Aorta (tissue), 5 donors: ENCODE measurements at regions of chr18 and their contacts with region 1.

Region 1: DNA sequence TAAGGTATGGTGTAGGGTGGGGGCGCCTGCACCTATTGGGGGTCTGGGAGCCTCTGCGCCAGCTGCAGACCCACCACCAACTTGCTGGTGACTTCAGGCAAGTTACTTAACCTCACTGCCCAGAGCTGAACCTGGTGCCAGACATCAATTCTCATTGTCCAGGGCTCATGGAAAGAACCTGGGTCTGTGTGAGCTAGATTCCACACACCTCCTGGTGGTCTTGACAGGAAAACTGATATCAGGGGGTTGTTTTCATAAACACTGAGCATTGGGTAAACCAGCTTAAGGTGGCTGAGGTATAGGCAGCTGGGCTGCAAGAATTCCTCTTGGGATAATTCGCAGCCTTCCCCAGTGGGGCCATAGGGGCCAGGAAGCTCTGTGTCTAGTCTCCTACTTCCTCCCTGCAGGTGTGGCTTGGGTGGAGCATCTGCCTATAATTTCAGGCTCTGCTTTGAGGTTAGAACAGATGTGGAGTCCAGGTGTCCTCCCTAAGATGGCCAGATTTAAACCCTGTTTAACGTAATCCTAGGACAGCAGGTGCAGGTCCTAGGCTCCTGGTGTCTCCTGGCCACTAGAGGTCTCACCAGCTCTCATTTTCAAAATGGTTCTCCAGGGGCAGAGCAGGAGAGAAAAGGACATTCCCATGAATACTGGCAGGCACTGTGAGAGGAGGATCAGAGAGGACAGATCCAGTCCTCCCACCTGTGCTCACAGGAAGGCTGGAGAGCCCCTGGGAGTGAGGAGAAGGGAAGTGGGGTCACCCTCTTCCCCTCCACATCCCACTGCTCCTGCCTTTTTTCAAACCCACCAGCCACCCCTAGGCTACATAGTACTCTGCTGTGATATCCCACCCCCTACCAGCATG is 100.4 kb upstream of the SMAD2 start:
- DNase-seq: peak in 1 of 2 donors; percentile 55
- ATAC-seq: peak; percentile 58
- H3K4me3 ChIP-seq: no peak overlapping the region
- H3K27ac ChIP-seq: no peak overlapping the region
- H3K4me1 ChIP-seq: no peaks in the 10 kb centered on the region
- H3K27me3 ChIP-seq: no peaks in the 10 kb centered on the region

Region 2: DNA sequence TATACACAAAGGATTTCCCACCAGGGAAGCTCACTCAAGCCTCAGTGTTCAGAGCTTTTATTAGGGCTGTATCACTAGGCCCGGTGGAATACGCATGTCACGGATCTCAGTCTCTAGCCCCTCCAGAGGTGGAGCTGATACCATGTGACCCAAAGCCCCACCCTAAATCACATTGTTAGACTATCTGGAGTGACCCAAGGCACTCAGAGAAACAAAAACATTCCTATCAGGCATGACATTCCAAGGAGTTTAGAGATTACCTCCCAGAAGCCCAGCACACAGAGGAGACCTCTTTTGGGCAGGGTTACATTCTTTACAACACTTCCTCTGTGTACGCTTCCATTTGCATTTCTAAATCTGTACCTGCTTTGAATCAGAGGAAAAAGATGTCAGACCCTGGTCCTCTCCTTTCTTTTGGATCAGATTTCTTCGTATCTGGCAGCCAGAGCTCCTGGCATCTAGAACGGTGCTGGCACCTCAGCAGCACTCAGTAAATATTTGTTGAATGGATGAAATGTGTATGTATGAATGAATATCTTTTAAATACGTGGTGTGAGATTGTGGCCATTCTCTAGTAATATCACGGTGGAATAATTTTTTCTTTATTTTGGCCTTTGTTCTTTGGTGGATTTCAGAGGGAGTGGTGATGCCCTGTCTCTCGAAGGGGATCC is 62.7 kb before region 1 on chr18:
- intact Hi-C with region 1: no loop called
- DNase-seq: no peak
- ATAC-seq: no peak
- H3K4me3 ChIP-seq: no peak overlapping the region
- H3K27ac ChIP-seq: peak overlapping the region; percentile 42 to 88
- H3K4me1 ChIP-seq: no peaks in the 10 kb centered on the region
- H3K27me3 ChIP-seq: no peaks in the 10 kb centered on the region

Region 3: DNA sequence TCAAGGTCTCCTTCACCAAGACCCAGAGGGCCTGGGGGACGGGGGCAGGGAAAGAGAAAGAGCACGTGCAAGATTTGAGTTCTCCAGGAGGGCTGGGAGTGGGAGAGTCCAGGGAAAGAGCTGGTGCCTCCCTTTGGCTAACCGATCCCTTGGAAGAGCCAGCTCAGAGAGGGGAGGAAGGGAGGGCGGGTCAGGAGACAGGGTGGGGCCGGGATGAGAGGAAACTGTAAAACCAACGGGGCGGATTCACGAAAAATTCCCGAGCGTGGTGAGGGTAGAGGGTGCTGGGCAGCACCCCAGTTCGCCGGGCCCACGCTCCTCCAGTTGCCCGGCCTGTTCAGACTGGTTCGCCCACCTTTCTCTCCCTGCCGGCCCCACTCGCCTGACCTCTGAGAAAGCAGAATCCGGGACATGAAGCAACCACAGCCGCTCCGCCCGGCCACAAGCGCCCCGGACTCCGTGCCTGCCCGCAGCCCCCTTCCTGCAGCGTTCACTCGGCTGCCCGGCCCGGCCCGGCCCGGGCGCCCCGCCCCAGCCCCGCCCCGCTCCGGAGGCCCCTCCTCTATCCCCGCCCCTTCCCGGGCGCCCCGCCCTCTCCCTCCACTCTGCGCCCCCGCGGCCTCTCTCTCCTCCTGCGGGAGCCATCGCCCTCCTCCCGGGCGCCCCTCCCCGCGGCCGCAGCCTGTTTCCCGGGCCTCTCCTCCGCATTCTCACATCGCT is 130.5 kb after region 1 on chr18:
- intact Hi-C with region 1: loop called in 1 of 2 experiments (anchors 5 kb)
- DNase-seq: peak; percentile 88 to 95
- ATAC-seq: peak; percentile 93
- H3K4me3 ChIP-seq: peak overlapping the region; percentile 50 to 57
- H3K27ac ChIP-seq: peak overlapping the region in 1 of 2 donors; percentile 80
- H3K4me1 ChIP-seq: no peaks in the 10 kb centered on the region
- H3K27me3 ChIP-seq: no peaks in the 10 kb centered on the region

Region 4: DNA sequence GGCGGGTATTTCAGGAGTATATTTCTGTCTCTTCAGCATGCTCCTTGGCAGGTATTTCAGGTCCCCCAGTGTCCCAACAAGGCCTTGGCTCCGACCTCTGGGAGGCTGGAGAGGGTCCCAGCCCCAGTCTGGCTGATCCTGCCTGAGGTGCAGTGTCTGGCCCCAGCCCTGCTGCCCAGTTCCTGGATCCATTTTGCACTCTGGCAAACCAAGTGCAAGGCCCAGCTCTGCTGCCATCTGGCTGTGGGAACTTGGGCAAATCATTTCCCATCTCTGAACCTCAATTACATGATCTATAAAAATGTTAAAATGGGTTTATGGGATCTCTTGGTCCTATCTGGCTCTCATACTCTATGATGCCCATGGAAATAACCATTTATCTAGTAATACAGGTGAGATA is 314.7 kb after region 1 on chr18:
- intact Hi-C with region 1: loop called in 1 of 2 experiments (anchors 10 kb)
- DNase-seq: no peak
- ATAC-seq: no peak
- H3K4me3 ChIP-seq: no peak overlapping the region
- H3K27ac ChIP-seq: no peak overlapping the region
- H3K4me1 ChIP-seq: no peaks in the 10 kb centered on the region
- H3K27me3 ChIP-seq: no peaks in the 10 kb centered on the region

Region 5: DNA sequence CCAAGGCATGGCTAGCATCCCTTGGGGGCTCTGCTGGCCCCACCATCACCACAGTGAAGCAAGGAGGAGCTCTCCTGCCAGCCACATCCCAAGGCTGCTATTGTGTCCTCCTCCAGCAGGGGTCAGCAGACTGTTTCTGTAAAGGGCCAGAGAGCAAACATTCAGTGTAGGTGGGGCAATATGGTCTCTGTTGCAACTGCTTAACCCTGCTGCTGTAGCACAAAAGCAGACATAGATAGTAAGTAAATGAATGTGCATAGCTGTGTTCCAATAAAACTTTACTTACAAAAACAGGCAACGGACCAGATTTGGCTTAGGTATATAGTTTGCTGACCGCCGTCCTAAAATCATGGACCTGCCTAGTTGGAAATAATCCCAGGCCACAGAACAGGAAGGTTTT is 414.7 kb after region 1 on chr18:
- intact Hi-C with region 1: loop called (anchors 1 to 2 kb)
- DNase-seq: peak; percentile 84 to 90
- ATAC-seq: peak; percentile 71
- H3K4me3 ChIP-seq: no peak overlapping the region
- H3K27ac ChIP-seq: no peak overlapping the region
- H3K4me1 ChIP-seq: no peaks in the 10 kb centered on the region
- H3K27me3 ChIP-seq: no peaks in the 10 kb centered on the region

Region 6: DNA sequence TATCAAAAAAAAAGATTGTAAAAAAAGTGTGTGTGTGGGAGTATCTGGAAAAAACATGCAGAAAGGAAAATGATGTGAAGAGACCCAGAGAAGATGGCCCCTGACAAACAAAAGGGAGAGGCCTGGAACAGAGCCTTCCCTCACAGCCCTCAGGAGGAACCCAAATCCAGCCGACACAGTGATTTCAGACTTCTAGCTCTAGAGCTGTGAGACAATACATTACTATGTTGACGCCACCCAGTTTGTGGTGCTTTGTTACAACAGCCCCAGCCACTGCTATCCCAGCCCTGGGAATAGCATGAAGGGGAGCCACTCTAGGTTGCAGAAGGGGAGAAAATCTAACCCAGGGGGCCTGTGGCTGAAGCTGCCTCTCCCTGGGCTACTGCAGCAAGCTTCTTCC is 437.3 kb after region 1 on chr18:
- intact Hi-C with region 1: loop called (anchors 5 kb)
- DNase-seq: no peak
- ATAC-seq: no peak
- H3K4me3 ChIP-seq: no peak overlapping the region
- H3K27ac ChIP-seq: no peak overlapping the region
- H3K4me1 ChIP-seq: no peaks in the 10 kb centered on the region
- H3K27me3 ChIP-seq: no peaks in the 10 kb centered on the region

Region 7: DNA sequence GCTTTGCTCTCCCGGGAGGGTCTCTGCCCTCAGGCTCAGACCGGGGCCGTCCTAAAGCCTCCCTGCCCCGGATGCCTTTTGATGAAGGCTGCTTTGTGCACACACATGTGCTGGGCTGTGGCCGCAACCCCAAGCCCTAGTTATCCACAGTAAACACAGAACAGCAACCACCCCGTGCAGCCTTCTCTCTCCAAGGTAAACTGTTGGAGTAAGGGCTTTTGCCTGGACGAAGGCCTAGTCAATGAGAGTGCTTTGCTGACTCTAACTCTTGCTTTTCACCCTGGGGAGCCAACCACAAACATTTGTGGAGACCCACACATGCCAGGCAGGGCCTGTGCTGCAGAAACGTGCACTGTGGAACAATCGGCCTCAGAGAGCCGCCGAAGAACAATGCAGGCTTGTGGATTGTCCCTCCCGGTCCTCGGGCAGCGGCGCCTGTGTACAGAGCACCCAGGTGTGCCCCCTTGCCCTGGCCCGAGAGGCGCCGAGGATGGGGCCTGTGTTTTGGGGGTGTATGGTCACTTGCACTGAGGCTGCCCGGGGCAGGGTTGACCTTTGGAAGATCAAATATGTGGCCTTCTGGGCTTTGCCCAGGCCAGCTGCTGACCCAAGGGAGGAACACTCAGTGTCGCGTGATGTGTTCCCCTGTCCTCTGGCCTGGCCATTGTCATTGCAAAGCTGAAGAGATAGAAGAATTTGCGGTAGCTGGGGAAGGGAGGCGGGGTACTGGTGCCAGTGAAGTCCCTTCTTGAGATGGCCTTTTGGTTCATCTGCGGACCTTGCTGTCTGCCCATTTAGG is 545.0 kb after region 1 on chr18:
- intact Hi-C with region 1: no loop called
- DNase-seq: peak in 1 of 2 donors; percentile 64
- ATAC-seq: peak; percentile 13
- H3K4me3 ChIP-seq: no peak overlapping the region
- H3K27ac ChIP-seq: no peak overlapping the region
- H3K4me1 ChIP-seq: no peaks in the 10 kb centered on the region
- H3K27me3 ChIP-seq: no peaks in the 10 kb centered on the region